Ascending aorta (tissue), 2 donors: ENCODE measurements at regions of chr12 and their contacts with region 1.

Region 1: DNA sequence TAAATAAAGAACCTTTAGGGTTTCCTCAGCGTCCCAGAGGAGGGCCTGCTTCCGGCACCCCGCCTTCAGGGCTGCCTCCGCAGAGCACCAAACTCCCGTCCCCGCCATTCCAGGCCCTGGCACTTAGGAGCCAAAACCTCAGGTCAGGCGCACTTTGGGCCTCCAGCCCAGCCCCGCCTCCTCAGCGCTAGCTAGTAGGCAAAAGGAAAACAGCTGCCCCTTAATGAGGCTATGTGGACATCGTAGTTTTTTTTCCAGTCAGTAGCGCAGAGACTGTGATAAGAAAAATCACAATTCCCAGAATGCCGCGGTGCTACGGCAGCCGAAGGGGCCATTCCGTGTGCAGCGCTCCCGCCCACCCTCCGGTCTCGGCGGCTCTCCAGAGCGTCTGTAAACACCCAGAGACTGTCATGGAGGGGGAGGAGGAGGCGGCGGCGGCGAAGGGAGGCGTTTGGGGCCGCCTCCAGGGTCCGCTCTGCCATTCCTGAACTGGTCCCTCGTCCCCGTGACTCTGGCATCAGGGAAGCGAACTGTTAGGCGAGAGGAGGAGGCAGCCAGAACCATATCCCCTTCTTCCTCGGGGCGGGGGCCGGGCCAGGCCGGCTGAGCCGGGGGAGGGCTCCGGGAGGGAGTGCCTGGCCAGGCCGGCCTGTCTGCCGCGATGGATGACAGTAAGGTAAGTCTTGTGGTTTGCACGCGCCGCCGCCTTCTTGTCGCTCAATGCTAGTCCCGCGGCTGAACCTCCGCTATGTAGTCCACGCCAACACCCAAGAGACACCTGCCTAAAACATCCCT is at the start of gene CREBL2:
- DNase-seq: peak; percentile 83 to 97
- H3K4me3 ChIP-seq: peak within 1 kb of the TSS; percentile 76 to 83
- H3K27ac ChIP-seq: peak within 1 kb of the TSS; percentile 91 to 94
- H3K4me1 ChIP-seq: peaks cover 3 to 16% of the 10 kb centered on the region in 2 donors
- H3K27me3 ChIP-seq: no peaks in the 10 kb centered on the region
- CTCF ChIP-seq: no peak
- total RNA-seq, gene CREBL2: 19.4 TPM

Region 2: GRCh38 chr12:12398026-12398859 is 213.5 kb before region 1 on chr12:
- intact Hi-C with region 1: loop called (anchors 1 kb)
- DNase-seq: peak in 1 of 2 donors; percentile 86
- H3K4me3 ChIP-seq: peak overlapping the region in 1 of 2 donors; percentile 23
- H3K27ac ChIP-seq: peak overlapping the region; percentile 67 to 81
- H3K4me1 ChIP-seq: peaks cover 6 to 20% of the 10 kb centered on the region in 2 donors
- H3K27me3 ChIP-seq: no peaks in the 10 kb centered on the region
- CTCF ChIP-seq: no peak

Region 3: GRCh38 chr12:12636641-12637040 is 24.9 kb after region 1 on chr12:
- intact Hi-C with region 1: no loop called
- DNase-seq: no peak
- H3K4me3 ChIP-seq: no peak overlapping the region
- H3K27ac ChIP-seq: no peak overlapping the region
- H3K4me1 ChIP-seq: no peaks in the 10 kb centered on the region
- H3K27me3 ChIP-seq: no peaks in the 10 kb centered on the region
- CTCF ChIP-seq: no peak